A673 (cell line): ENCODE measurements at regions of chr3 and their contacts with region 1.

Region 1: DNA sequence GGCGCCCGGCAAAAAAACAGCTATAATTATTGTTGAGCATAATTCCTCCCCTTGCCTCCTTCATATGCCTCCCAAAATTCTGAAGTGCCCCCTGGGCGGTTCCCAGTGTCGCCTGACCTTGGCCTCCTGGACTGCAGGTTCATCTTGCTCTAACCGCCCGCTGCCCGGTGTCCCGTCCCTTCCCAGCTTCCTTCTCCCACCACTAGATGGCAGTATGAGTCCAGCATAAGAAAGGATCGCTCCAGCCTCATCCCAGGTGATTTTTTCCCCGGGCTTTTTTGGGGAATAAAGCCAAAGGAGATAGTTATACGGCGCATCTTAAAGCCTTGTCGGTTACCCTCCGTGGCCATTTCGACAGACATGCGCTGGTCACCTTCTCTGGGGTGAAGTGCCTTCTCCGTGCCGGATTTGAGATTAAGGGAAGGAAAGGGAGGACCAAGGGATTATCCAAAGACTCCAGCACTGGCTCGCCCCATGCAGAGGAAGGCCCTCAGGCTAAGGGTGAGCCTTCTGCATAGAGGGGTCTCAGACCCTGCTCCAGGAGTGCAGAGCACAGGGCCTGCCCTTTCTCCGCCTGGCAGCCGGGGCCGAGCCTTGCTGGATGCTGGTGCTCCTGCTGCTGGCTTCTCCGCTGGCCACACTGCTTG is 45.8 kb upstream of the TRA2B start:
- DNase-seq: peak; percentile 88
- H3K4me3 ChIP-seq: peak overlapping the region; percentile 31
- H3K27ac ChIP-seq: peak overlapping the region; percentile 35
- H3K4me1 ChIP-seq: peaks cover 19% of the 10 kb centered on the region
- H3K27me3 ChIP-seq: no peaks in the 10 kb centered on the region
- CTCF ChIP-seq: peak; percentile 92

Region 2: DNA sequence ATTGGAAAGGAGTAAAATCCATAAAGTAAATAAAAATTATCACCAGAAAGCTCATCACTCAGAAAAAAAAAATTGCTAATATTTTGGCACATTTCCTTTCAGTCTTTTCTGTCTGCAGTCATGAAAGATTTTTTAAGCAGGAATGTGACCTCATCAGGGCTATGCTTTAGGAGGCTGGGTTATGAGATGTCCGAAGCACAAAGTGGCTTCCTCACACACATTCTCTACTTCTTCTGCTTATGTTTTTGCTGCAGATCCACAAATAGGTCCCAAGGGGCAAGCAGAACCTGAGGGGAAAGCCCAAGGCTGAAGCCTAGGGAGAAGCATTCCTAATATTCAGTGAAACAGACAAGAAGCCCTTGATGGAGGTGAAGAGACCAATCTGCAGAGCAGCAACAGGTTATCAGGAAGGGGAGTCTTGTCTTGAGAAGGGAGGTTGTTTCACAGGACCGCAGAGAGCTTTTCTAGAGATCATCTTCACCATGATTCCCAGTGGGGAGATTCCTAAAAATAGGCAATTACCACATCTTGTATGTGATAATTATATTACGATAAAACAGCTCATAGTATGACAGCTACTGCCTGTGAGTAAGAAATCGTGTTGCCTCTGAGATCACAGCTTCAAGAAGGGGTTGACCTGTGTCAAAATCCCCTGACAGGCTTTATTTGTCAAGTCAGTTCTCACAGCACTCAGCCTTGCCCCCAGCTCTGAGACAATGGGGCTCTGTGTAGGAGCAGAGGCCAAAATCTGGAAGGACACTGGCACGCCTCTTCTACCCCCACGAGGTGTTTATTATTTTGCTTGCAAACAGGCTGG is 219.2 kb before region 1 on chr3:
- CTCF ChIA-PET with region 1: interaction called, 11 read pairs
- POLR2A ChIA-PET with region 1: no interaction called
- intact Hi-C with region 1: no loop called
- DNase-seq: no peak
- H3K4me3 ChIP-seq: no peak overlapping the region
- H3K27ac ChIP-seq: no peak overlapping the region
- H3K4me1 ChIP-seq: peaks cover 64% of the 10 kb centered on the region
- H3K27me3 ChIP-seq: no peaks in the 10 kb centered on the region
- CTCF ChIP-seq: no peak

Region 3: DNA sequence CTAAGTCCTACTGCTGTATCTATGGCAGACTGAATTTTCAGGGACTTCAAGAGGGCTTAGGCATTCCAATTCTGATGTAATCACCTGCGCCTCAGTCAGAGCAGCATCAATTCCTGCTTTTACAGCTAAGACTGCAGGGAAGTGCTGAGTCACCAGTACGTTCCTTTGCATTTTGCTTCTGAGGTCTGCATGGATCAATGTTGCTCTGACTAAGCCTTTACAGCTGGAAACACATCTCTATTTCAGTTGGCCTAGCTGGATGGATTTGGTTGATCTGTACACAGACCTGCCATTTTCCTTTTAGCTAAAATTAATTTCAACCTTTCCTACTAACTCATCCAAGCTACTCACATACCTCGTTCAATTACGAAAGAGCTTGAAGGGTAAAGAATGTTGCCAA is 74.0 kb after region 1 on chr3:
- CTCF ChIA-PET with region 1: no interaction called
- POLR2A ChIA-PET with region 1: no interaction called
- intact Hi-C with region 1: no loop called
- DNase-seq: peak; percentile 38
- H3K4me3 ChIP-seq: no peak overlapping the region
- H3K27ac ChIP-seq: no peak overlapping the region
- H3K4me1 ChIP-seq: peaks cover 15% of the 10 kb centered on the region
- H3K27me3 ChIP-seq: no peaks in the 10 kb centered on the region
- CTCF ChIP-seq: no peak

Region 4: GRCh38 chr3:186241910-186242821 is 258.5 kb after region 1 on chr3:
- CTCF ChIA-PET with region 1: interaction called, 3 read pairs
- POLR2A ChIA-PET with region 1: no interaction called
- intact Hi-C with region 1: loop called (anchors 5 kb)
- DNase-seq: peak; percentile 96
- H3K4me3 ChIP-seq: peak overlapping the region; percentile 46
- H3K27ac ChIP-seq: peak overlapping the region; percentile 82
- H3K4me1 ChIP-seq: peaks cover 32% of the 10 kb centered on the region
- H3K27me3 ChIP-seq: no peaks in the 10 kb centered on the region
- CTCF ChIP-seq: peak; percentile 78

Region 5: GRCh38 chr3:186277268-186277909 is 293.8 kb after region 1 on chr3:
- CTCF ChIA-PET with region 1: interaction called, 26 read pairs
- POLR2A ChIA-PET with region 1: no interaction called
- intact Hi-C with region 1: loop called (anchors 1 kb)
- DNase-seq: peak; percentile 83
- H3K4me3 ChIP-seq: no peak overlapping the region
- H3K27ac ChIP-seq: no peak overlapping the region
- H3K4me1 ChIP-seq: no peaks in the 10 kb centered on the region
- H3K27me3 ChIP-seq: no peaks in the 10 kb centered on the region
- CTCF ChIP-seq: peak; percentile 82

Region 6: DNA sequence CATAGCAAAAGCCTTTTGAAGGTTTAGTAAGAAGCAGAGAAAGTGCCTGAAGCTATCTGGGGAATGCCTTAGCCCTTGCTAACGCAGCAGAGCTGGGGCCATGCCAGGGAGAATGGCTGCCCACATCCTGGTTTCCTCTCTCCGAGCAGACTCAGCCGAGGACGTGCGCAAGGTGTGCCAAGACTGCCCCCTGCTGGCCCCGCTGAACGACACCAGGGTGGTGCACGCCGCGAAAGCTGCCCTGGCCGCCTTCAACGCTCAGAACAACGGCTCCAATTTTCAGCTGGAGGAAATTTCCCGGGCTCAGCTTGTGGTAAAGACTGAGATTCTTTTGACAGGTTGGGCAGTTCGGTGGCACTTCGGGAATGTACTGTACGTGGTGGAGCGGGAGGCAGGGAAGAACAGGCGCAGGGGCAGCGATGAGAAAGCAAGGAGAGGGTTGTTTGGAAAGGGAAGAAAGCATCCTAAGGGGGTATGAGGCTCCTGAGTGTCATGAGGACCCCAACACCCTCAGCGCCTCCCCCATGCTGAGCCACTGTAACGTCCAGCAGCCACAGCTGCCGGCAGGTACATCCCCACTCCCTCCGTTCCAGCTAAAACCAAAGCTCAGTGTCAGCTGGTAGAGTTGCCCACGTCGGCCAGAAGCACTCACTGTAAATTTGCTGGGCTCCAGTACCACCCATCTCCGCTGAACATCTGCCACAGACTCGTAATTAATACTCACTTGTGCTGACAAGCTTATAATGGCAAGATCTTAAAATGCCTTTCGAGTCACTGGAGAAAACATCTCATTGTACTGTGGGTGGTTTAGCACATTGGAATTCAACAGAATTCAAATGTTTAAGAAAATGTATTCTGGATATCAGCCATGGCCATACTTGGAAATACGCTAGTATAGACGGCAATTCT is 633.7 kb after region 1 on chr3:
- CTCF ChIA-PET with region 1: no interaction called
- POLR2A ChIA-PET with region 1: no interaction called
- intact Hi-C with region 1: loop called (anchors 5 kb)
- DNase-seq: peak; percentile 93
- H3K4me3 ChIP-seq: peak overlapping the region; percentile 34
- H3K27ac ChIP-seq: no peak overlapping the region
- H3K4me1 ChIP-seq: peaks cover 35% of the 10 kb centered on the region
- H3K27me3 ChIP-seq: no peaks in the 10 kb centered on the region
- CTCF ChIP-seq: peak; percentile 99